Uterus (tissue), 4 donors: ENCODE measurements at regions of chr1 and their contacts with region 1.

Region 1: DNA sequence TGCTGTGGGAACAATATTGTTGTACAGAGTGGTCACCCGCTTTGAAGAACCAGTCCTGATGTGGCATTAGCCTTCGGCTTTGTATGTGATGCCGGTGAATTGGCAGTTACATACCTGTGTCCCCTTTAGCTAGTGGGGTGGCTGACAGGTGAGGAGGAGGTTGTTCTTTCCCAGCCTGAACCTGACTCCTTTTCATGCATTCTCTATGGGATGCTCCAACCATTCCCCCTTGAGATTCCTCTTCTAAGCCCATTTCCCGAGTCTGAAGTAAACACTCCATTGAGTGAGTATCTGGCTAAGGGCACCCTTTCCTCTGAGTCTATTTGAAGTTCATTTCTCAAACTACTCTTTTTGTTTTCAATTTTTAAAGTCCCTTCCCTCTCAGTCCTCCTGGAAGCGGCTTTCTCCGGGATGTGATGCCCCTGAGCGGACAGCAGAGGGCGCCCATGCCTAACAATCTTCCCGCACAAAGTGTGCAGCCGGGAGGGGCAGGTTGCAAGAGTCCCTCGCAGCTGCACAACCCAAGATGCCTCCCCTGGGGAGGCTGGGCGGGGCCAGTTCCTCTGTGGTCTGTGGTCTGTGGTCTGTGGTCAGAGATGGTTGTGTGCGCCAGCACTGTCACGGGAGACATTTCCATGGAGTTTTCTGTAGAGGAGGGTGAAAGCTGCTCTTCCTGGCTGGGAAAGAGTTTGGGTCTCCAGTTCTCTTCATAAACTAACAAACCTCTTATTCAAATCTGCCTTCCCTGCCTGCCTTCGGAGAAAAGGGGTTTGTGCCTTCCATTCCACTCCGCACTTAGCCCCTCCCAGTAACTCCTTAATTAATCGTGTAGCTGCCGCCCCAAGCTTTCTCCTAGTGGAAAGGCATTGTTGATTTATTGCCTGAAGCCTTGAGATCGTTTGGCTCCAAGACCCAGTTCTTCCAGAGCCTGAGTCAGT is 36.4 kb upstream of the LMX1A start:
- DNase-seq: peak; percentile 78 to 82
- H3K4me3 ChIP-seq: no peak overlapping the region
- H3K27ac ChIP-seq: peak overlapping the region; percentile 17 to 40
- H3K4me1 ChIP-seq: no peaks in the 10 kb centered on the region
- H3K27me3 ChIP-seq: no peaks in the 10 kb centered on the region
- CTCF ChIP-seq: peak; percentile 90 to 94 (median 91)
- POLR2A ChIP-seq: no peak

Region 2: DNA sequence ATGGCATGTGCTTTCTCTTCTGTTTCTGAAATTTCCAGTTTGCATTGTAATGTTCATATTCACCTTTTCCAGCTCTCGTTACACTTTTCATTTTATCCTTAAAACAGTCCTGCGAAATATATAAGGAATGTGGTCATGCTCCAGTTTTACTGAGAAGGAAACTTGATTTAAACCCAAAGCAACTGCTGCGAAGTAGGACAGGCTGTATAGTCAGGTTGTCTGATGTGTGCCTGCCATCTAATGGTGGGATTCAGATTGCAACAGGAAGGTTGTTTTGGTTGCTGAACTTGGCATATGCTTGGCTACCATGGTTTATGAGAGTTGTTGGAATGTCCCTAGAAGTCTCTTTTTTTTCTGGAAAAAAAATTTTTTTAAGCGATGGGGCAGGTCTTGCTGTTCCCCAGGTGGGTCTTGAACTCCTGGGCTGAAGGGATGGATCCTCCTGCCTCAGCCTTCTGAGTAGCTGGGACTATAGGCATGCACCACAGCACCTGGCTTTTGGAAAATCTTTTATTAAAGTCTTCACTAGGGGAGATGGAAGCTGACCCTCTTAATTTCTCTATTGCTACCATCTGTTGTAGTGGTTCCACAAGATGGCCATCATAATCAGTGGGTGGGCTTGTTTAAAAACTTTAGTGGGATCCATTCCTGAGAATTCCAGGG is 521.4 kb after region 1 on chr1:
- intact Hi-C with region 1: loop called (anchors 10 kb)
- DNase-seq: peak; percentile 52 to 63
- H3K4me3 ChIP-seq: no peak overlapping the region
- H3K27ac ChIP-seq: no peak overlapping the region
- H3K4me1 ChIP-seq: no peaks in the 10 kb centered on the region
- H3K27me3 ChIP-seq: no peaks in the 10 kb centered on the region
- CTCF ChIP-seq: peak; percentile 72 to 94 (median 88)
- POLR2A ChIP-seq: no peak